Activated B cell treated with CpG ODN at 0.5 μM for 24 hours (primary cell): ENCODE measurements at regions of chr2 and their contacts with region 1.

Region 1: DNA sequence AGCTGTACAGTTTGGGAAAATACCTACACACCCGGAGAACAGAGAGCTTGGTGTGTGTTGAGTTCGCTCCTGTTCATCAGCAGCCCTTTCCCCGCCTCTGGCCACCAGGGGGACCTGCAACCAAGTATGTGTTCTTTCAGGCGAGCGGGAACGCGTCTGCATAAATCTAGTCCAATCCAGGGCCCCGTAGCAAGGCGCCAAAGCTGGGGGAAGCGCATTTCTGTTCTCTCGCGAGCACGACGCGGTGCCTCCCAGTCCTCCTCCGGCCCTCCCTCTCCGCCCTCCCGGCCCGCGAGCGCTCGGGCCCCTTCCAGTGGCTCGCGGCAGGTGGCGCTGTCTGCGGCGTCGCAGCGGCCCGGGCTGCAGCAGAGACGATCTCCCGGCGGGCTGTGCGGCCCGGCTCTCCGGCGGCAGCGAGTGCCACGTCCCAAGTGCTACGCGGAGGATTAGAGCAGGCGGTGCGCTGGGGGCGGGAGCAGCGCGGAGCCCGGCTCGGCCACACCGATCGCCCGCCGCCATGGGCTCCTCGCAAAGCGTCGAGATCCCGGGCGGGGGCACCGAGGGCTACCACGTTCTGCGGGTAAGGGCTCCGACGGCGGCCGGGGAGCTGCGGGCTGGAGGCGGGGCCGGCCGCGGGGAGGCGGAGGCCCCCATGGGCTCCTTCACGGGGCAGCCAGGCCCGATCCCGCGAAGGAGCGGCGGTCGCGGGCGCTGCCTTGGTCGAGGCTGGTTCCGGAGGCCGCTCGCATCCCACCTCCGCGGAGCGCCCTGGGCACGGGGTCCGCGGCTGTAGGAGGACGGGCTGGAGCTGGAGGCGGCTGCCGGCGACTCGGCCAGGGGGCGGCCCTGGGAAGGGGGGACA is at the start of gene GORASP2:
- DNase-seq: peak; percentile 96
- ATAC-seq: peak; percentile 93
- H3K4me3 Mint-ChIP-seq: peak within 1 kb of the TSS; percentile 90
- H3K27ac Mint-ChIP-seq: peak within 1 kb of the TSS; percentile 88
- H3K4me1 Mint-ChIP-seq: peaks cover 38% of the 10 kb centered on the region
- H3K27me3 Mint-ChIP-seq: no peaks in the 10 kb centered on the region
- CTCF ChIP-seq: peak; percentile 75
- total RNA-seq, gene GORASP2: 60.7 and 69.7 TPM in 2 replicates

Region 2: GRCh38 chr2:169584005-169584877 is 1344.8 kb before region 1 on chr2 and contains the start of gene PPIG:
- CTCF ChIA-PET with region 1: no interaction called
- POLR2A ChIA-PET with region 1: no interaction called
- intact Hi-C with region 1: loop called (anchors 10 kb)
- DNase-seq: peak; percentile 75
- ATAC-seq: peak; percentile 89
- H3K4me3 Mint-ChIP-seq: peak within 1 kb of the TSS; percentile 99
- H3K27ac Mint-ChIP-seq: peak within 1 kb of the TSS; percentile 99
- H3K4me1 Mint-ChIP-seq: peaks cover 39% of the 10 kb centered on the region
- H3K27me3 Mint-ChIP-seq: no peaks in the 10 kb centered on the region
- CTCF ChIP-seq: no peak
- total RNA-seq, gene PPIG: 68.0 and 69.8 TPM in 2 replicates

Region 3: DNA sequence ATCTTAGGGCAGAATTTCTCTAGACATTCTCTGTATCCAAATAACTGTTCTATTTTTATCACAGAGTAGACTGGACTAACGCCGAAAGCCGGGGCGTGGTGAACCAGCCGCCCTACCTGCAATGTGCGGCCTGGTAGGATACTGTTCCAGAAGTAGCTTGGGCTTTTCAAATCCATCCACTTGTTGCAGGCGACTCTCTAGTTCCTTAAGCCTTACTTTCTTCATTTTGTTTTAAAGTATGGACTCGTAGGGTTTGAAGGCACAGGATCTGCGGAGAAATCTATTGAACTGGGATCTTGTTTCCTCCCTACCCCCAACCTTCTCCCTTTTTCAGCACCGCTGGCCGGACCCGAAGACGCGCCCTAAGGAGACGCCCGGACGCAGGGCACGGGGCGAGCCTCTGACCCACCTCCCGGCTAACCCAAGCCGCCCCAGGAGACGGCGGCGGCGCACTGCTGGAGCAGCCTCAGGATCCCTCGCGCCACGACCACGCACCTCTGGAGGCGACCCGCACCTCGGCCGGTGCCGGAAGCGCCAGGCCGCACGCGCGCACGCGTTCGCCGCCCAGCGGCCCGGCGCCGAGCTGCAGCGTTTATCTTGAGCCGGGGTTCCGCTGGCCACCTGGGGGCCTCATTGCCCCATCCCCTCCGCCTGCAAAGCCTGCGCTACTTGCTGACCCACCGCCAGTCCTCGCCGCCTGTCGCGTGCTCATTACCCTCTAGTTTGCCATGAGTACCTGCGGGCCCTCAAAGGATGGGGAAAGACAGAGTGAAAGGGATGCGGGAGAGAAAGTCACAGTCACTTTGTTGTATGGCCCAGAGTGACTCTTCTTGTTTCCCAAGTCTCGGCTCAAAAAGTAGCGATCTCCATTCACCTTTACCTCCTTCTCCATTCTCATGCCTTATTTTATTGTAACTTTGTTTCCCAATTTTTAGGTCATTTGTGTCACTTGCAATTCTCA is 1104.4 kb before region 1 on chr2 and contains the start of gene METTL5:
- CTCF ChIA-PET with region 1: no interaction called
- POLR2A ChIA-PET with region 1: no interaction called
- intact Hi-C with region 1: loop called (anchors 2 kb)
- DNase-seq: peak; percentile 84
- ATAC-seq: peak; percentile 73
- H3K4me3 Mint-ChIP-seq: peak within 1 kb of the TSS; percentile 92
- H3K27ac Mint-ChIP-seq: peak within 1 kb of the TSS; percentile 85
- H3K4me1 Mint-ChIP-seq: peaks cover 51% of the 10 kb centered on the region
- H3K27me3 Mint-ChIP-seq: no peaks in the 10 kb centered on the region
- CTCF ChIP-seq: peak; percentile 40
- total RNA-seq, gene METTL5: 48.3 and 51.1 TPM in 2 replicates

Region 4: DNA sequence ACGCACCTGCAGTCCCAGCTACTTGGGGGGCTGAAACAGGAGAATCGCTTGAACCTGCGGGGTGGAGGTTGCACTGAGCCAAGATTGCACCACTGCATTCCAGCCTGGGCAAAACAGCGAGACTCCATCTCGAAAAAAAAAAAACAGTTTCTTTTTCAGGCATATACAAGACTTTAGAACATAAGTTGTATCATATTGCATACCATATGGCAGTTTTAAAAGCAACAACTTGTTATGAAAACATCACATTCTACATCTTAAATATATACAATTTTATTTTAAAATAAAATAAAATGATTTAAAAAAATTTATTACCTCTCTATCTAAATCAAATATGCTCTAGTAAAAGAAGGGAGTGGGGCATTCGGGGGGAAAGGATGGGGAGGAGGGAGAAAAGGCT is 253.4 kb before region 1 on chr2:
- CTCF ChIA-PET with region 1: no interaction called
- POLR2A ChIA-PET with region 1: no interaction called
- intact Hi-C with region 1: no loop called
- DNase-seq: no peak
- ATAC-seq: no peak
- H3K4me3 Mint-ChIP-seq: no peak overlapping the region
- H3K27ac Mint-ChIP-seq: no peak overlapping the region
- H3K4me1 Mint-ChIP-seq: no peaks in the 10 kb centered on the region
- H3K27me3 Mint-ChIP-seq: peaks cover 5% of the 10 kb centered on the region
- CTCF ChIP-seq: no peak

Region 5: GRCh38 chr2:170895023-170895757 is 33.9 kb before region 1 on chr2:
- CTCF ChIA-PET with region 1: no interaction called
- POLR2A ChIA-PET with region 1: no interaction called
- intact Hi-C with region 1: no loop called
- DNase-seq: no peak
- ATAC-seq: no peak
- H3K4me3 Mint-ChIP-seq: no peak overlapping the region
- H3K27ac Mint-ChIP-seq: no peak overlapping the region
- H3K4me1 Mint-ChIP-seq: no peaks in the 10 kb centered on the region
- H3K27me3 Mint-ChIP-seq: peaks cover 15% of the 10 kb centered on the region
- CTCF ChIP-seq: no peak

Region 6: GRCh38 chr2:171319164-171319810 is 390.2 kb after region 1 on chr2:
- CTCF ChIA-PET with region 1: interaction called, 3 read pairs
- POLR2A ChIA-PET with region 1: interaction called, 5 read pairs
- intact Hi-C with region 1: loop called (anchors 2 kb)
- DNase-seq: no peak
- ATAC-seq: peak; percentile 61
- H3K4me3 Mint-ChIP-seq: peak overlapping the region; percentile 80
- H3K27ac Mint-ChIP-seq: peak overlapping the region; percentile 92
- H3K4me1 Mint-ChIP-seq: peaks cover 74% of the 10 kb centered on the region
- H3K27me3 Mint-ChIP-seq: no peaks in the 10 kb centered on the region
- CTCF ChIP-seq: no peak

Region 7: DNA sequence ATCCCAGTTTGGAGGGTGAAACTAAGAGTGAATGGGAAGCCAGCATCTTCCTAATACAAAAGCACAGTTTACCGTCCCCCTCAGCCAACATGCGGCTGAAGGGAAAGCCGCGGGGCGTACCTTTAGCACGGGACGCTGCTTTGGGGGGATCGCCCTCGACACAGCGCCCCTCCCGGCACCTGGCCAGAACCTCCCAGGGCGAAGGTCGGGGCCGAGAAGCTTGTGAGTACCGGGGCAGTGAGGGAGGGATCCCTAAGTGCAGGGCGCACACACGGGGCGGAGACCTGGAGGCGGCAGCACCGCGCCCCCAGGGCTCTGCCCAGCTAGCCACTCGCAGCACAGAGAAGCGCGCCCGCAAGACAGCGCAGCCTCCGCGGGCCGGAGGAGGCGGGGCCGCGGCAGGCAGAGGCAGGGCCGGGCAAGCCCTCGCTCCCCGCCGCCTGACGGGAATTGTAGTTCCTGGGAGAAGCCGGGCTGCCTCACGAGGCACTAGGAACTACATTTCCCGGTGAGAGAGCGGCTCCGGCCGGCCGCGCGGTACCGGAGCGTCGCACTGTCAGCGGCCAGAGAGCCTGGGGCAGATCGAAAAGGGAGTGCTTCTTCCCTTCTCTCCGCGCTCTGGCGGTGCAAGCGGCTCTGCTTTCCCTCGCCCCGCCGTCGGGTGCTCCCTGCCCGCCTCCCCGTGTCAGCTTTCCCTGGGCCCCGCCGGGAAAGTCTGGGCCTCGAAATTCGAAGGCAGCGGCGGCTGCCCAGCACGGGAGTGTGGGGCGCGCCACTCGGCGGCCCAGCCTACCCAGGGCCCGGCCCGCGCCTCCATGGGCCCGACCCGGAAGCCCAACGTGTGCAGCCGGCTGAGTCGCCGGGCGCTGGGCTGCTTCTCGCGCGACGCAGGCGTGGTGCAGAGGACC is 505.0 kb after region 1 on chr2 and contains the starts of genes DCAF17 and METTL8:
- CTCF ChIA-PET with region 1: interaction called, 11 read pairs
- POLR2A ChIA-PET with region 1: interaction called, 21 read pairs
- intact Hi-C with region 1: loop called (anchors 1 kb)
- DNase-seq: peak; percentile 91
- ATAC-seq: peak; percentile 92
- H3K4me3 Mint-ChIP-seq: peak within 1 kb of the TSS; percentile 90
- H3K27ac Mint-ChIP-seq: peak within 1 kb of the TSS; percentile 94
- H3K4me1 Mint-ChIP-seq: peaks cover 24% of the 10 kb centered on the region
- H3K27me3 Mint-ChIP-seq: no peaks in the 10 kb centered on the region
- CTCF ChIP-seq: no peak
- total RNA-seq, gene DCAF17: 23.1 and 23.5 TPM in 2 replicates
- total RNA-seq, gene METTL8: 16.5 and 22.9 TPM in 2 replicates

Region 8: DNA sequence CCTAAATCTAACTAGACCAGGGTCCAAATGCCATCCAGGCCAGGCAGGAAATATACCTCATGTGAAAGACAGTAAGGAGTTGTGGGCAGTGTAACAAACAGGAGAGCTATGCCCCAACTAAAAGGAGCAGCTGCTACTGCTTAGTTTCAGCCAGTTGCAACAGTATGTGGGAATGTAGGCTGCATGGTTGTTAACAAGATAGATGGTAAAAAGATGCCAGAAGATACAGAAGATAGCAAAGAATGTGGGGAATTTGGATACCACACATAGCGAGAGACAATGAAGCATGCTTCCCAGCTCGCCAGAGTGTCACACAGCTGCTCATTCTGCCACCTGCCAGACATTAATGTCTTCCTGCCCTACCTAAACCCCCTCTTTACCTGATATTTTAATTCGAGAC is 553.8 kb after region 1 on chr2:
- CTCF ChIA-PET with region 1: no interaction called
- POLR2A ChIA-PET with region 1: no interaction called
- intact Hi-C with region 1: no loop called
- DNase-seq: no peak
- ATAC-seq: no peak
- H3K4me3 Mint-ChIP-seq: no peak overlapping the region
- H3K27ac Mint-ChIP-seq: no peak overlapping the region
- H3K4me1 Mint-ChIP-seq: no peaks in the 10 kb centered on the region
- H3K27me3 Mint-ChIP-seq: no peaks in the 10 kb centered on the region
- CTCF ChIP-seq: no peak

Region 9: DNA sequence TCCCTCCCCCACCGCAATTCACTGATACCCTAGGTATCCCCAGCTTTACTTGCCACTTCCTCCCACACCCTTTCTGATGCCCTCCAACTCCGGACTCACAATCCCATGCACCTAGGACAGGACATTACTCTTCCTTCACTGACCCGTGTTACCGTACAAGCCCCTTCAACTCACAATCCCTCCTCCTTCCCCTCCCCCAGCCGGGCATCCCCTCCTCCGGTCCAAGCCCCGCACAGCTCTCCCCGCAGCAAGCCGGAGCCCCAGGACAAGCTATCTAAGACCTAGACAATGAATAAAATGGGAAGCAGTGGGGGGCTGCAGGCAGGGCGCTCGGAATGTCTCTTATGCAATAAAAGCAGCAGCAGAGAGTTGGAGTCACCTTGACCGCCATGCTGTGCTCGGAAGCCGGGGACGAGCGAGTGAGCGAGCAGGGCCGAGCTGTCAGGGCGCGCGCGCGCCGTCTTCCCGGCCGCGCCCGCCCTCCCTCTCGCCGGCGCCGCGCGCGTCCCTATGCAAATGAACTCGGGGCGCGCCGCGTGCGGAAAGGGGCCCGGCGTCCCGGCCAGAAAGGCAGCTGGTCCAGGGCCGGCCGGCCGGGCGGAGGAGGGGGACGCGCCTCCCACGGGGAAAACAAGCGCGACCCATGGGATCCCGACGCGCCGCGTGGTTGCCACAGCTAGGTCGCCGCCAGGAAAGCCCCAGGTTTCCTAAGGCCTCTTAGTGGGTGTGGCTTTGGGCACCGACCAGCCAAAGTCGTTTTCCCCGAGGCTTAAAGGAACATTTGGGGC is 965.0 kb after region 1 on chr2 and contains the start of gene SLC25A12:
- CTCF ChIA-PET with region 1: no interaction called
- POLR2A ChIA-PET with region 1: no interaction called
- intact Hi-C with region 1: loop called (anchors 1 kb)
- DNase-seq: peak; percentile 81
- ATAC-seq: peak; percentile 95
- H3K4me3 Mint-ChIP-seq: peak within 1 kb of the TSS; percentile 98
- H3K27ac Mint-ChIP-seq: peak within 1 kb of the TSS; percentile 85
- H3K4me1 Mint-ChIP-seq: peaks cover 23% of the 10 kb centered on the region
- H3K27me3 Mint-ChIP-seq: no peaks in the 10 kb centered on the region
- CTCF ChIP-seq: no peak
- total RNA-seq, gene SLC25A12: 18.8 and 22.2 TPM in 2 replicates